Sciatic nerve (tissue), 2 donors: ENCODE measurements at regions of chr2 and their contacts with region 1.

Region 1: GRCh38 chr2:95076784-95077529 is 44.7 kb downstream of the MRPS5 start:
- DNase-seq: peak; percentile 86
- ATAC-seq: peak; percentile 76

Region 2: GRCh38 chr2:95022309-95023221 is 54.4 kb before region 1 on chr2:
- intact Hi-C with region 1: loop called (anchors 10 kb)
- DNase-seq: peak; percentile 81
- ATAC-seq: peak; percentile 47